ENCODE measurements at regions of chr7 and their contacts with region 1.

Region 1: GRCh38 chr7:133255486-133255885 is 2.6 kb downstream of the EXOC4 start:
- DNase-seq: no peak
- H3K4me3 ChIP-seq: no peak overlapping the region
- H3K27ac ChIP-seq: no peak overlapping the region
- H3K4me1 ChIP-seq: no peaks in the 10 kb centered on the region
- H3K27me3 ChIP-seq: no peaks in the 10 kb centered on the region
- CTCF ChIP-seq: no peak
- POLR2A ChIP-seq: no peak

Region 2: GRCh38 chr7:132677918-132678317 is 577.6 kb before region 1 on chr7:
- intact Hi-C with region 1: loop called (anchors 5 kb)
- DNase-seq: no peak
- H3K4me3 ChIP-seq: no peak overlapping the region
- H3K27ac ChIP-seq: no peak overlapping the region
- H3K4me1 ChIP-seq: no peaks in the 10 kb centered on the region
- H3K27me3 ChIP-seq: no peaks in the 10 kb centered on the region
- CTCF ChIP-seq: no peak
- POLR2A ChIP-seq: no peak

Measured in breast epithelium (tissue), 4 donors.